Psoas muscle (tissue), 8 donors: ENCODE measurements at regions of chr3 and their contacts with region 1.

Region 1: DNA sequence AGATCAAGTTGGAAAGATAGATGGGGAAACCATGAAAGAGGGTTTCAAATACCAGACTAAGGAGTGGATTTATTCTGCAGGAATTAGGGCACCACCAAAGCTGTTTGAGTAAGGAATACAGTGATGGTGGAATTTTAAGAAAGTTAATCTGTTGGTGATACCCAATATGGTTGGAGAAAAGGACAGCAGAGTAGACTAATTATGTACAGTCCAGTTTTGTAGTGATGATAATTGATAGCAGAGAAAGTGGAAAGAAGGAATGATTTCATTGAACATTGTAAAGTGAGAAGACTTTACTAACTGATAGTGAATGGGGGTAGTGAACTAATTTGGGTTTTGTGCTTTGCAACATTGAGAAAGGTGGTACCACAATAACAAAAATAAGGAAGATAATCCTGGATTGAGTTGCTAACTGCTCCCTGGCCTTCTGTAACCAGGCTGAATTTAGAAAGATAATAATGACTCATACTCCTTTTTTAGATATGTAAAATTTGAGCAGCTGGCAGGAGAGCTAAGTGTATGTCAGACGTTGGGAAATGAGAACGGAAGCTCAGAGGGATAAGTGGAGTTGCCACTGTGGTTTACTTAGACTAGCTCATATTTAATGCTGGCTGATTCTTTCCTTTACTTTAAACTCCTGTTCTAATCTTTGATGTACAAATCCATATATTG is 16.9 kb downstream of the TCAIM start:
- DNase-seq: no peak
- ATAC-seq: peak; percentile 96 to 99 (median 98)
- H3K4me3 ChIP-seq: no peak overlapping the region
- H3K27ac ChIP-seq: peak overlapping the region; percentile 78
- H3K4me1 ChIP-seq: peaks cover 27% of the 10 kb centered on the region
- H3K27me3 ChIP-seq: no peaks in the 10 kb centered on the region
- CTCF ChIP-seq: no peak

Region 2: GRCh38 chr3:44338010-44338827 is 17.3 kb before region 1 on chr3 and contains the start of gene TCAIM:
- intact Hi-C with region 1: loop called in 1 of 2 experiments (anchors 2 kb)
- DNase-seq: peak; percentile 97 to 99
- ATAC-seq: peak; percentile 99
- H3K4me3 ChIP-seq: peak within 1 kb of the TSS; percentile 73
- H3K27ac ChIP-seq: peak within 1 kb of the TSS; percentile 99
- H3K4me1 ChIP-seq: peaks cover 25% of the 10 kb centered on the region
- H3K27me3 ChIP-seq: no peaks in the 10 kb centered on the region
- CTCF ChIP-seq: no peak
- total RNA-seq, gene TCAIM: 15.8 to 31.0 (median 19.6) TPM